ENCODE measurements at regions of chr13 and their contacts with region 1.

Region 1: DNA sequence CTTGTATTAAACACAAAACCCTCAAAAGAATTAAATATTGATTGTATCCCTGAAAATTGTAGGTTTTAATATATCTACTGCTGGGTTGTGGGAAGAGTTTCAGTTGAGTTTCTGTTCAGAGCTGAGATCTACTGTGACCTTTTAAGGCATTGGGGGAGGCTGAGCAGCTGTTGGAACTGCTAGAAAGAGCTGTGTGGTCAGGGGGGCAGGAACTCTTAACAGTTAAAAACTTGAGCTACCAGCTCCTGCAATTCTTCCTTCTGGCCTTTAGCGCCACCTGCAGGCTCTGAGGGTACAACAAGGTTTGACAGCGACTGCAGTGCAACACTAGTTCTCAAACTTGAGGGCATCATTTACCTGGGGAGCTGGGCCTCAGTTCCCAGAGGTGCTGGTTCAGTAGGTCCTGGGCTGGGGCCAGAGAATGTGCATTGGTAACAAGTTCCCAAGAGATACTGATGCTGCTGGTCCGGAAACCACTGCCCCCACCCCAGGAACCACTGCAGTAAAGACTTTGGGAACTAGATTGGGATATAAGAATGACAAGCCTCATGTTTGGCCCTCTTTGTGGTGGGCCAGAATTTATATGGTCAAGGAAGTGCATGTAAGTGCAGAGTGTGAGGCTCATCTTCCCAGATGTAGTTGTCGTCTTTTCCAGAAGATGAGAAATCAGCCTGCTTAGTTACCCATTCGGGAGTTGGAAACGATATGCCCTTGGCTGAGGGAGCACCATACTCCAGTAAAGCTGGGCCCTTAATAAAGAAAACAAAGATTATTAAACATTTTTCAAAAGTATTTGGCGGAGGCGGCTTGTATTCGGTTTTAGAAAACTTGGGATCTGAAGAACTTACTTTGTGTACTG is 2.6 kb downstream of the RNASEH2B start:
- DNase-seq: peak; percentile 68
- H3K4me3 ChIP-seq: peak overlapping the region in 1 of 2 experiments; percentile 40; a peak in 1 of 4 replicates
- H3K27ac ChIP-seq: no peak overlapping the region
- H3K4me1 ChIP-seq: peaks cover 7 to 25% of the 10 kb centered on the region in 2 experiments
- H3K27me3 ChIP-seq: no peaks in the 10 kb centered on the region
- CTCF ChIP-seq: peak; percentile 88
- EP300 ChIP-seq: peak in 1 of 2 experiments; percentile 31; a peak in 3 of 4 replicates
- RAD21 ChIP-seq: peak; percentile 94

Region 2: DNA sequence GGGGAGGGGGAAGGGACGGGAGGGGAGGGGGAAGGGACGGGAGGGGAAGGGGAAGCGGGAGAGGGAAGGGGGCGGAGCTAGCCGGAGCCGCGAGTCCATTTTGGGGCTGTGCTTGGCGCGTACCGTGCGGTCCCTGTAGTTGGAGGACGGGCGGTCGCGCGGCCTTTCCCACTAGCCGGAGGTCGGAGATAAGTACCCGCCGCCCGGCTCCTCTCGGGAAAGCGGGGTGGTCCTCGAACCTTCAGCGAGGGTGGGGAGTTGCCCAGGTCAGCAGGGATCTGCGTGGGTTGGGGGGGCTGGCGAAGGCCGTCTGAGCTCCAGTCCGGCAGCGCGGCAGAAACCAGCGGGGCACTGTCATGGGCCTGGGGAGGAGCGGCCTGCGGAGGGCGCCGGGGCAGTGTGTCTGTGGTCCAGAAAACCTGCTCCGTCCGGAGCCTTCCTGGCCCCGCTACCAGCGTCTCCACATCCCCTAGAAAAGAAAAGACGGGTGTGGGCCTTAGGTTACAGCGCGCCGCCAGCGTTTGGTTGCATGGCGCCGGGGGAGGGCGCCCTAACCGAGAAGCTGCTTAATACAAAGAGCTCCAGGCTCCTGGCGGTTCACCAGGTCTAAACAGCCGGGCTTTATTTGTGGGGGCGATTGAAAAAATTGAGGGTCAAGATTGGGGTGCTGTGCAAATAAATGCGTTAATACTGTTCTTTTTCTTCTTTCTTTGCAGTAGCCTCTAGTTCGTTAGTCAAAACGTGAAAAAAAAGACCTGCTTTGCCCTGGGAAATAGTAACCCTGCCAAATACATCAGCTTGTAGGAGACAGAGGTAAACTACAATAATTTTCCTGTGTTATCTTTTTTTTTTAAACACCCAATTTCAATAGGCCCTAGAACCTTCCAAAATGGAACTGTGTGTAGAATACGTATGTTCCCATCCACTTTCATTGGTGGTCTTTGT is 914.9 kb before region 1 on chr13 and contains the start of gene TRIM13:
- CTCF ChIA-PET with region 1: interaction called, 12 read pairs
- POLR2A ChIA-PET with region 1: interaction called, 5 read pairs
- DNase-seq: peak; percentile 72
- H3K4me3 ChIP-seq: peak within 1 kb of the TSS; percentile 71 to 94
- H3K27ac ChIP-seq: peak within 1 kb of the TSS; percentile 97 to 98
- H3K4me1 ChIP-seq: peaks cover 19 to 29% of the 10 kb centered on the region in 2 experiments; a peak in 3 of 4 replicates
- H3K27me3 ChIP-seq: no peaks in the 10 kb centered on the region
- CTCF ChIP-seq: peak; percentile 86
- EP300 ChIP-seq: no peak
- RAD21 ChIP-seq: peak; percentile 68
- polyA plus RNA-seq, gene TRIM13: 8.3 and 12.9 TPM in 2 replicates

Region 3: GRCh38 chr13:50081679-50082425 is 830.3 kb before region 1 on chr13:
- CTCF ChIA-PET with region 1: interaction called, 35 read pairs
- POLR2A ChIA-PET with region 1: no interaction called
- DNase-seq: peak; percentile 94
- H3K4me3 ChIP-seq: peak overlapping the region; percentile 93 to 95
- H3K27ac ChIP-seq: peak overlapping the region; percentile 85 to 90
- H3K4me1 ChIP-seq: peaks cover 5 to 7% of the 10 kb centered on the region in 2 experiments; a peak in 3 of 4 replicates
- H3K27me3 ChIP-seq: no peaks in the 10 kb centered on the region
- CTCF ChIP-seq: peak; percentile 46
- EP300 ChIP-seq: no peak
- RAD21 ChIP-seq: no peak

Region 4: GRCh38 chr13:50801087-50801931 is 110.9 kb before region 1 on chr13:
- CTCF ChIA-PET with region 1: interaction called, 14 read pairs
- POLR2A ChIA-PET with region 1: no interaction called
- DNase-seq: peak; percentile 53
- H3K4me3 ChIP-seq: no peak overlapping the region
- H3K27ac ChIP-seq: no peak overlapping the region
- H3K4me1 ChIP-seq: peaks cover 0 to 7% of the 10 kb centered on the region in 2 experiments; a peak in 2 of 4 replicates
- H3K27me3 ChIP-seq: no peaks in the 10 kb centered on the region
- CTCF ChIP-seq: peak; percentile 79
- EP300 ChIP-seq: no peak
- RAD21 ChIP-seq: peak; percentile 95

Region 5: GRCh38 chr13:50901701-50902100 is 10.5 kb before region 1 on chr13:
- CTCF ChIA-PET with region 1: interaction called, 47 read pairs
- POLR2A ChIA-PET with region 1: no interaction called
- DNase-seq: no peak
- H3K4me3 ChIP-seq: no peak overlapping the region
- H3K27ac ChIP-seq: no peak overlapping the region
- H3K4me1 ChIP-seq: no peaks in the 10 kb centered on the region; a peak in 1 of 4 replicates
- H3K27me3 ChIP-seq: no peaks in the 10 kb centered on the region
- CTCF ChIP-seq: no peak
- EP300 ChIP-seq: no peak
- RAD21 ChIP-seq: no peak

Region 6: DNA sequence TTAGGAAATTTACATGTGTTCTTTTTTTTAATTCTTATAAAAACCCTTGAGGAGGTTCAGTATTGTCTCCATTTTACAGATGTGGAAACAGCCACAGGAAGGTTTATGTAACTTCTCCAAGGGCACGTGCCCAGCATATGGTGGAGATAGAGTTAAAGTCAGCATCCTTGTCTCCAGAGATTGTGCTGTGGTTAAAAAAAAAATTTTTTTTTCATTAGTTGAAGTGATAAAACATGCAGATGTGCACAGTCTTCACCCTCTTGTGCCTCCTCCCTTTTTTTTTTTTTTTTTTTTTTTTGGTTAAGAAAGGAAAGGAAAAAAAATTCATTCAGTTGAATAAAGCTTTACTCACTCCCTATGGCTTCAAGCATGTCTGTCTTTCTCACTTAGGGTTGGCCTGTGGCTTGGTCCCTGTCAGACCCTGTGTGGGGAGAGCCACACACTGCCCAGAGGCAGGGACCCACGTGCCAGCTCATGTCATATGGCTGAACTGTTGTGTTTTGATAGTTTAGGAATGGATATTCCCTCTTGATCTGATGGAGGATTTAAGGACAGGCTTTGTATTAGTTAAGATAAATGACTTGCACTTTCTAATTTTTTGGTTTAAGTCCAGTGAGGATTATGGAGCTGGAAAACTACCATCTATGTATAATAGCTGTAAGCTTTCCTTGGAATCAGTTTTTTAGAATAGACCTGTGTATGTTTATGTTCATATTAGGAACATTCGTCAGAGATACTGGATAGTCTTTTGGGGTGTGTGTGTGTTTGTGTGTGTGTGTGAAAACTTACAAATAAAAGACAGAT is 16.7 kb after region 1 on chr13:
- CTCF ChIA-PET with region 1: interaction called, 30 read pairs
- POLR2A ChIA-PET with region 1: no interaction called
- DNase-seq: no peak
- H3K4me3 ChIP-seq: no peak overlapping the region
- H3K27ac ChIP-seq: no peak overlapping the region
- H3K4me1 ChIP-seq: peaks cover 0 to 2% of the 10 kb centered on the region in 2 experiments; a peak in 1 of 4 replicates
- H3K27me3 ChIP-seq: no peaks in the 10 kb centered on the region
- CTCF ChIP-seq: no peak
- EP300 ChIP-seq: no peak
- RAD21 ChIP-seq: no peak

Region 7: GRCh38 chr13:52001120-52001731 is 1089.1 kb after region 1 on chr13:
- CTCF ChIA-PET with region 1: no interaction called
- POLR2A ChIA-PET with region 1: no interaction called
- DNase-seq: peak; percentile 64
- H3K4me3 ChIP-seq: no peak overlapping the region; a peak in 1 of 4 replicates
- H3K27ac ChIP-seq: no peak overlapping the region
- H3K4me1 ChIP-seq: no peaks in the 10 kb centered on the region; a peak in 1 of 4 replicates
- H3K27me3 ChIP-seq: no peaks in the 10 kb centered on the region
- CTCF ChIP-seq: peak; percentile 72
- EP300 ChIP-seq: no peak
- RAD21 ChIP-seq: peak; percentile 75

Measured in SK-N-SH (cell line).